ENCODE measurements at regions of chr9 and their contacts with region 1.

Region 1: GRCh38 chr9:76658535-76659231 is 105.6 kb upstream of the PCA3 start:
- DNase-seq: no peak
- ATAC-seq: peak; percentile 85
- H3K4me3 Mint-ChIP-seq: no peak overlapping the region
- H3K27ac Mint-ChIP-seq: no peak overlapping the region
- H3K4me1 Mint-ChIP-seq: peaks cover 16% of the 10 kb centered on the region
- H3K27me3 Mint-ChIP-seq: no peaks in the 10 kb centered on the region

Region 2: DNA sequence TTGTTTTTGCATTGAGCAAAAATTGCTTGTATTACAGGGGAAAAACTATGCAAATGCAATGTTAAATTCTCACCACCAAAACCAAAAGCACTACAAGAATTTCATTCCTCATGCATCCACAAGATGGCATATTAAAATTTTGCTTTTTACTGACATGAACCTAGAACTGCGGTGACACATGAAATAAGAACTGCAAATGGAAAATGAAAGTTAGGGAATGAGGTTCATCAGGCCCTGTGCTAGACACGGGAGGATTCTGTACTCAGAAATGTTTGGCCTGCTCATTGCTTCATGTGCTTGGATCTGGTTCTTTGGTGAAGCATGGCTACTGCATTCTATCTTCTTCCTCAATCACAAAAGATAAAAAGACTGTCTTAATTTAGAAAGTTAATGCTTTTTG is 255.3 kb before region 1 on chr9:
- CTCF ChIA-PET with region 1: interaction called, 3 read pairs
- POLR2A ChIA-PET with region 1: no interaction called
- intact Hi-C with region 1: loop called (anchors 1 kb)
- DNase-seq: peak; percentile 30
- ATAC-seq: peak; percentile 94
- H3K4me3 Mint-ChIP-seq: peak overlapping the region; percentile 16
- H3K27ac Mint-ChIP-seq: peak overlapping the region; percentile 62
- H3K4me1 Mint-ChIP-seq: peaks cover 11% of the 10 kb centered on the region
- H3K27me3 Mint-ChIP-seq: no peaks in the 10 kb centered on the region

Region 3: GRCh38 chr9:76451234-76451633 is 207.4 kb before region 1 on chr9:
- CTCF ChIA-PET with region 1: interaction called, 10 read pairs
- POLR2A ChIA-PET with region 1: no interaction called
- intact Hi-C with region 1: loop called (anchors 1 kb)
- DNase-seq: no peak
- ATAC-seq: no peak
- H3K4me3 Mint-ChIP-seq: no peak overlapping the region
- H3K27ac Mint-ChIP-seq: no peak overlapping the region
- H3K4me1 Mint-ChIP-seq: peaks cover 7% of the 10 kb centered on the region
- H3K27me3 Mint-ChIP-seq: no peaks in the 10 kb centered on the region

Region 4: DNA sequence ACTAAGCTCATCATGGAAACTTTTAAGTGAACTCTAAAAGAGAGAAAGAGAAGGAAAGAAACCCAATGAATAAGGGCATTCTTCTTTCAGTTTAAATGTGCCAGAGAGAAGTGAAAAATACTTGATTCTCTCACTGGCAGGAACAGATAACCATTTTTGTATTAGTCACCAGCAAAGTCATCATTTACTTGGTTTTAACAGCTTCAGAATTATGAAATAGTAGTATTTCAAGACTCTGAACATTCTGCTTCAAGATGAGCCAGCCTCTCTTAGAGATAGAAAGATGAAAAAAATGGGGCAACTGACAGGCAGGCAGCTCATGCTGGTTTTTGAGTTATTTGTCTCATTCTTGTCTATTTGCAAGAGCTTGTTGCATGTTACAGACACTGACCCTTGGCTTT is 96.2 kb before region 1 on chr9:
- CTCF ChIA-PET with region 1: no interaction called
- POLR2A ChIA-PET with region 1: no interaction called
- intact Hi-C with region 1: loop called in 1 of 2 experiments (anchors 5 kb)
- DNase-seq: no peak
- ATAC-seq: peak; percentile 91
- H3K4me3 Mint-ChIP-seq: no peak overlapping the region
- H3K27ac Mint-ChIP-seq: no peak overlapping the region
- H3K4me1 Mint-ChIP-seq: peaks cover 19% of the 10 kb centered on the region
- H3K27me3 Mint-ChIP-seq: peaks cover 15% of the 10 kb centered on the region

Region 5: DNA sequence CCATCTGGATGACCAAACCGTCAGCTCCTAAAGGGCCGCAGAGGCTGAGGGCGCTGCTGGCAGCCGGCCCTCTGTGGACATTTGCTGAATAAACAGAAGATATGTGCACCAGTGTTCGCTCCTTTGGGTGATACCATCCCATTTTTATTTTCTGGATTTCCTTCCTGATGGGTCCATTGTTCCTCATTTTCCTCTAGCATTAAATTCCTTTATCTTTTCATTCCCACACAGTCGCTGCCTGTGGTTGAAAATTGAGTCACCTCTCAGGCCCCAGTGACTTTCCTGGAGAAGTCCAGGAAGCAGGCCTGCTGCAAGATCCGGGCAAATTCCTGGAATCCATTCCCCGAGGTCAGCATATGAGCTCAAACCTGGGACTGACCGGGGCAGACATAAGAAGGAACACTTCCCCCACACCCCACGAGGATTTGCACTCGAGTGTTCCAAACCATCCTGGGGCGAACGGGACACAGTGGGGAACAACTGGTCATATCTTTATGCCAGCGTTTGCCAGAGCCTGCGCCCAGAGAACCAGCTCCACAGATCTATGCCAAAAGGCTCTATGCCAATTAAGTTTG is 18.9 kb after region 1 on chr9:
- CTCF ChIA-PET with region 1: no interaction called
- POLR2A ChIA-PET with region 1: no interaction called
- intact Hi-C with region 1: no loop called
- DNase-seq: no peak
- ATAC-seq: no peak
- H3K4me3 Mint-ChIP-seq: no peak overlapping the region
- H3K27ac Mint-ChIP-seq: no peak overlapping the region
- H3K4me1 Mint-ChIP-seq: peaks cover 10% of the 10 kb centered on the region
- H3K27me3 Mint-ChIP-seq: no peaks in the 10 kb centered on the region

Measured in activated CD4-positive, alpha-beta T cell treated with anti-CD3 and anti-CD28 coated beads for 36 hours (primary cell).